ENCODE measurements at regions of chr1 and their contacts with region 1.

Region 1: DNA sequence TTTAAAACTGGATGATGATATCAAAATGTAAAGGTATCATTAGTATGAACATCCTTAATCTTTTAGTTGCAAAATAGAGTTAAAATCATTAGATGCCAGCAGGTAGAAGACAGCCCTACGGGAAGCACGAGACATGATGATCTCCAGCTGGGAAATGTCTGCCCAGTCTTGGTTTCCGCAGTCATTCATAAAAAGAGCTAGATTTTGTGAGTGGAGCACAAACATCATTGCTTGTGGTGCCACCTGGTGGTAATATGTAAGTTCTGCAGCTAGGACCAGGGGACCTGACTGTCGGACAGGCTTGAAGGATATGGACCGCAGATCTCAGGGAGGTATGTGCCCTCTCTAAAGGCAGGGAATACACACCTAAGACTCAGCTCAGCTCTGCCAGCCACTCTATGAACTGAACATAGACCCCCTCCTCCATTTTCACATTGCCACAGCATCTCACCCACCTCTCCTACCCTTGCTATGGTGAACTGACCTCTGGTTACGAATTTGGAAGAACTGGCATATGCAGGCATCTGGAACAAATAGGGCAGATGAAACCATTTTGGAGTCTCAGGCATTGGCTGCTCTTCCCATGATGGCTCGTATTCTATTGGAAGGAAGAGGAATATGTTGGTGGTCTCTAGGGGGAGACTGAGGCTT is 9.2 kb downstream of the FCMR start:
- DNase-seq: peak in 1 of 2 donors; percentile 76
- ATAC-seq: peak; percentile 28 to 82 (median 66)
- H3K4me3 ChIP-seq: no peak overlapping the region
- H3K27ac ChIP-seq: no peak overlapping the region
- H3K4me1 ChIP-seq: peaks cover 4 to 29% (median 6%) of the 10 kb centered on the region in 9 donors
- H3K27me3 ChIP-seq: peaks cover 0 to 32% (median 15%) of the 10 kb centered on the region in 7 donors
- CTCF ChIP-seq: peak; percentile 68 to 91 (median 85)

Region 2: DNA sequence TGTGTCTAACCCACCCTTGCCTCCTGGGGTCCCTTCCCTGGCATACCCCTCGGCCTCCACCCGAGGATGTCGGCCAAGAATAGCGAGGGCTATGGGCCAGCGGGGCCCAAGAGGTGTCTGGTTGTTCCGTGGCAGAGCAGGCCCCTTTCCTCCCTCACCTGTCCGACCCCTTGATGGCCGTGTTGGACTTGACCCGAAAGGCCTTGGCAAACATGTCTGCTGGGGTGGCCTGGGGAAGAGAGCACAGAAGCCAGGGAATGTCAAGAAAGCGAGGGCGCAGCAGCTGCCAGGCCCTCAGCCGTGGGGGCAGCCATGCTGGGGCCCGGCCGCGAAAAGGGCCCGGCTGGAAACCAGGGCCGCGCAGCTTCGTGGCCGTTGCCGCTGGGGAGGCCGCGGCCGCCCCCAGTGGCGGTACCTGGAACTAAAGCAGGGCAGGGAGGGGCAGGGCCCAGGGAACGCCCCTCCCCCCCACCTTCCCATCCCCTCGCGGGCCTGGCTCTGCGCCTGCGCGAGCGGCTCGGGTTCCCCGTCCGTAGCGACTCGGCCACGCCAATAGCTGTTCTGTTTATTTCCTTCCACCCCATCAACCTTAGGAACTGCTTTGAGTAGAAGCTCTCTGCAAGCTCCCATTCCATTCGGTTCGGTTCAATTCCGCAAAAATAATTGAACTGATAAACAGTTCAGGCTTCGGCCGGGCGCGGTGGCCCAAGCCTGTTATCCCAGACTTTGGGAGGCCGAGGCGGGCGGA is 300.3 kb before region 1 on chr1 and contains the start of gene EIF2D:
- intact Hi-C with region 1: loop called in 1 of 10 experiments (anchors 1 kb)
- DNase-seq: peak; percentile 94 to 96
- ATAC-seq: peak; percentile 97 to 99 (median 99)
- H3K4me3 ChIP-seq: peak within 1 kb of the TSS; percentile 65 to 96 (median 74)
- H3K27ac ChIP-seq: peak within 1 kb of the TSS; percentile 57 to 95 (median 88)
- H3K4me1 ChIP-seq: peaks cover 5 to 15% (median 10%) of the 10 kb centered on the region in 9 donors
- H3K27me3 ChIP-seq: no peaks in the 10 kb centered on the region
- CTCF ChIP-seq: peak in 8 of 9 donors; percentile 97 to 100 (median 99)
- total RNA-seq, gene EIF2D: 26.1 to 32.2 (median 29.5) TPM

Region 3: DNA sequence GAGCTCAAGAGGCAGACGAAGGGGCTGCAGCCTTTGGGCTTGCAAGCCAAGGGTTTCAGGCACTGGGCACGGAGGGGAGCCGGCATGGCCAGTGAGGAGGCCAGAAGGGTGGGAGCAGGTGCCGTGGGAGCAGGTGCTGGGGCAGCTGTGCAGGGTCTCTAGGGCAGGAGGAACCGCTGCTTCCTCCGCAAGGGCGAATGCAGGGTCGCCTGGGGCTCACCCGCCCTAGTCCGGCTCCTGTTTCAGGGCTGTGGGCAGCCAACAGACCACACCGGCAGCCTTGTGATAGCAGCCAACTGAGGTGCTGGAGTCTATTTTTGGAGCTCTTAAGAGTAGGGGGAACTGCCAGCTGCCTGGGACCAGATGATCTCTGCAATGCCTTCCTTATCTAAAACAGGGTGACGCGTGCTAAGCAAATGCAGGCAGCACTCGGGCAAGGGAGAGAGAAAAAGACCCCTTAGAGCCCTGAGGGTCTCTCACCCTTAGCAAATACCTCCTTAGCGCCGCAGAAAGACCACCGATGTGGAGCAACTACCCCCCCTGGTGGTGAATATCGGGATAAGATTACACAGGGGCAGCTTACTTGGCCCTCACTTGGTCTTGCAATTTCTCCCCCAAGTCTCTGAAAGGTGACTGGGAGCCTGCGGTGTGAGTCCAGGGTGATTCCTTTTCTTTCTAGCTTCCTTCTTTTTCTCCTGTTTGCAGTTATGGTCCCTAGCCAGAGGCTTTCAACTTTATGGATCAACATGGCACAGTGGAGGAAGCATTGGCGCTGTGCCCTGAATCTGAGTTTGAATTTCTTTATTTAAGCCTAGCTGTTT is 248.5 kb before region 1 on chr1:
- intact Hi-C with region 1: no loop called
- DNase-seq: peak; percentile 63 to 77
- ATAC-seq: peak; percentile 64 to 80 (median 77)
- H3K4me3 ChIP-seq: peak overlapping the region in 7 of 10 donors; percentile 6 to 39 (median 29)
- H3K27ac ChIP-seq: peak overlapping the region; percentile 71 to 96 (median 90)
- H3K4me1 ChIP-seq: peaks cover 3 to 76% (median 44%) of the 10 kb centered on the region in 9 donors
- H3K27me3 ChIP-seq: peaks cover 0 to 7% (median 0%) of the 10 kb centered on the region in 7 donors
- CTCF ChIP-seq: peak; percentile 78 to 89 (median 85)

Region 4: GRCh38 chr1:206734499-206735142 is 177.9 kb before region 1 on chr1:
- intact Hi-C with region 1: loop called in 9 of 10 experiments (anchors 2 to 10 kb)
- DNase-seq: peak in 1 of 2 donors; percentile 37
- ATAC-seq: peak in 5 of 8 donors; percentile 14 to 31 (median 24)
- H3K4me3 ChIP-seq: no peak overlapping the region
- H3K27ac ChIP-seq: peak overlapping the region in 1 of 10 donors; percentile 70
- H3K4me1 ChIP-seq: peaks cover 10 to 65% (median 44%) of the 10 kb centered on the region in 9 donors
- H3K27me3 ChIP-seq: no peaks in the 10 kb centered on the region
- CTCF ChIP-seq: peak; percentile 42 to 79 (median 65)

Region 5: DNA sequence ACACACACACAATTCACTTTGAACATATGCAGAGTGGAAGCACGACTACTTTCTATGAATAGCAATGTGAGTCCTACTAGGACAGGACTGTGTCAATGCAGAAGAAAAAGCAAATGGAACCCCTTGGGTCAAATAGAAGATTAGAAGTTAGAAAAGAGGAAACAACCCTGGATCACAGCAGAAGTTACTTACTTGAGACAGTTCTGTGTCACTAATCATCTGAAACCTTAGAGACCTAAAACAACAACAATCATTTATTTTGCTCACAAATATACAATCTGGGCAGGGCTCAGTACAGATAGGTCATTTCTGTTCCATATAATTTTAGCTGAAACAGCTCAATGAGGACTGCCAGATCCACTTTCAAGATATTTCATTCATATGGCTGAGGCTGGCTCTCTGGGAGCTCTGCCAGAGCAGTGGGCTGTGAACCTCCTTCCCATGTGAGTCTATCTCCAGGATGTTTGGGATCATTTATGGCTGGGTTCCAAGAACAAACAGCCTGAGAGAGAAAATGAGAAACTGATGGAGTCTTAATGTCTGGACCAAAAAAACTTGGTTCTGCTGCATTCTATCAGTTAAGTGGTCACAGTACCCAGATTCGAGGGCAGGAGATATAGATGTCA is 97.7 kb before region 1 on chr1:
- intact Hi-C with region 1: loop called in 6 of 10 experiments (anchors 2 to 5 kb)
- DNase-seq: peak in 1 of 2 donors; percentile 34
- ATAC-seq: peak in 5 of 8 donors; percentile 25 to 67 (median 50)
- H3K4me3 ChIP-seq: no peak overlapping the region
- H3K27ac ChIP-seq: peak overlapping the region in 1 of 10 donors; percentile 23
- H3K4me1 ChIP-seq: peaks cover 0 to 20% (median 15%) of the 10 kb centered on the region in 9 donors
- H3K27me3 ChIP-seq: no peaks in the 10 kb centered on the region
- CTCF ChIP-seq: no peak

Measured in heart right ventricle (tissue), 16 donors.